Left ventricle myocardium superior (tissue), 1 donor: ENCODE measurements at regions of chr6 and their contacts with region 1.

Region 1: GRCh38 chr6:5401845-5402738 is 140.8 kb downstream of the FARS2 start:
- DNase-seq: no peak
- ATAC-seq: no peak

Region 2: DNA sequence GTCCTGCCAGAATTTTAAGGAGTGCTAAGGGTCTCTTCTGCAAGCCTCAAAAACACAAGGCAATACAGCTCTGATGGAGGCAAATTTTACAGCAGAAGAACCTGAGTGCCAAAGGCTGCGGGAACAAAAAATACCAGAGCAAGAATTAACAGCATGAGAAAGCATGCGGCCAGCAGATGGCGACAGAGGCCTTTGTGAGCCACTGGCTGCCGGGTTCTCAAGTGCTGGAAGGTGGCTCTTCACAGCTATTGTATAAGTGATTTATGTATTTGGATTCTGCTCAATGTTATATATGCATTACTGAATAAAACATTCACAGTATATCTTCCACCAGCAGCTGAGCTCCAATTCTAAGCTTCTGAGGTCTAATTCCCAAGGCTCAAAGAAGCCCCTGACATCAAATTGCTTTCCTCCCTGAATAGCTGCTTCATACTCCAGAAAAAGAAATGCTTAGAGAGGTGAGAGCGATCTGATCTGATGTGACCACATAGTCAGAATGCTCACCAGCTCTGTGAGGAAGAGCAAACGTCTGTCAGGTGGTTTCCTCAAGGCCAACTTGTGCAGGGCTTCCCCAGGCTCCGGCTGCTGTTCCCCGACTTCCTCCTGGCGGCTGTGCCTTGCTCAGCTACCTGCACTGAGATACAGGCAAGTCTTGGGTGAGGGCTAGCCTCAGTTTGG is 258.3 kb before region 1 on chr6:
- intact Hi-C with region 1: loop called (anchors 5 kb)
- DNase-seq: peak; percentile 94
- ATAC-seq: peak; percentile 85

Region 3: DNA sequence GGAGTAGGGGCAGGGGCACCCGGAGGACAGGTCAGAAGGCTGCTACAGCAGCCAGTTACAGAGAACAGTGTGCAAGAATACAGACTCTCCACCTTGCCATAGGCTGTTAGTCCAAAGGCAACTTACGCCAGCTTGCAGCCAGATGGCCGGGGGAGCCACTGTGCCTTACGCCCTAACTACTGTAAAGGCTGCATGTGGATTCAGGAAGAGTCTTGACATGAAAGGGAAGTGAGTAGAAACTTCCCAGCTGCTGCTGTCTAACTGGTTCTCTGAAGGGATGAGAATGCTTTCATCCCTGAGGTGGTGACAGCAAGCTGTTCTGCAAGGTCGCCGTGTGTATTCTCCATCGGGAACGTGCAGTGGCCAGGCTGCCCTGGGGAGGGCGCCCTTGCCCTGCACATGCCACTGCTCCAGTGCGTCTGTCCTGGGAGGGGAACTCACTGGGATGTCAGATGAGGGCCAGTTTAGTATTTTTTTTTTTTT is 187.5 kb before region 1 on chr6:
- intact Hi-C with region 1: loop called (anchors 10 kb)
- DNase-seq: peak; percentile 76
- ATAC-seq: peak; percentile 92

Region 4: DNA sequence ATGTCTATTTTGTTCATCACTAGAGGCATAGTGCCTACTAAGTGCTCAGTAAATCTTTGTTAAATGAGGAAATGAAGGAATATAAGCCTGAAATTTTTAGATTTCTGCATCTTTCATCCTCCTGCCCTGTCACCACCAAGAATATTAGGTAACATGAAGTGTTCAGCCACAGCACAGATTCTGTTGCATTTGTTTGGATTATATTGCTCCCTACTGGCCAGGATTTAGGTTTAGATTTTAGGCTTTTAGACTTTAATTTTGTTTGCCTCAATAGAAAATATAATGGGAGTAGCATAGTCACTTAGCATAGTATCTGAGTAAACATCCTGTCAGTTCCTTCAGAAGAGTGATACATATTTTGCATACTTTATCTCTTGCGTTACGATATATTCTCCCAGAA is 126.6 kb before region 1 on chr6:
- intact Hi-C with region 1: no loop called
- DNase-seq: no peak
- ATAC-seq: no peak